Right cardiac atrium (tissue), 5 donors: ENCODE measurements at regions of chr20 and their contacts with region 1.

Region 1: GRCh38 chr20:57654363-57654997 is 34.3 kb upstream of the ZBP1 start:
- DNase-seq: peak in 2 of 3 donors; percentile 49 to 67
- ATAC-seq: peak; percentile 64 to 73
- H3K4me3 ChIP-seq: no peak overlapping the region
- H3K27ac ChIP-seq: no peak overlapping the region
- H3K4me1 ChIP-seq: no peaks in the 10 kb centered on the region
- H3K27me3 ChIP-seq: no peaks in the 10 kb centered on the region

Region 2: GRCh38 chr20:57709931-57710799 is 55.7 kb after region 1 on chr20 and contains the start of gene PMEPA1:
- intact Hi-C with region 1: loop called in 1 of 4 experiments (anchors 10 kb)
- DNase-seq: peak; percentile 95 to 98 (median 97)
- ATAC-seq: peak; percentile 95
- H3K4me3 ChIP-seq: peak within 1 kb of the TSS; percentile 75
- H3K27ac ChIP-seq: peak within 1 kb of the TSS; percentile 84
- H3K4me1 ChIP-seq: peaks cover 6% of the 10 kb centered on the region
- H3K27me3 ChIP-seq: no peaks in the 10 kb centered on the region
- total RNA-seq, gene PMEPA1: 31.7 to 82.0 (median 44.3) TPM

Region 3: DNA sequence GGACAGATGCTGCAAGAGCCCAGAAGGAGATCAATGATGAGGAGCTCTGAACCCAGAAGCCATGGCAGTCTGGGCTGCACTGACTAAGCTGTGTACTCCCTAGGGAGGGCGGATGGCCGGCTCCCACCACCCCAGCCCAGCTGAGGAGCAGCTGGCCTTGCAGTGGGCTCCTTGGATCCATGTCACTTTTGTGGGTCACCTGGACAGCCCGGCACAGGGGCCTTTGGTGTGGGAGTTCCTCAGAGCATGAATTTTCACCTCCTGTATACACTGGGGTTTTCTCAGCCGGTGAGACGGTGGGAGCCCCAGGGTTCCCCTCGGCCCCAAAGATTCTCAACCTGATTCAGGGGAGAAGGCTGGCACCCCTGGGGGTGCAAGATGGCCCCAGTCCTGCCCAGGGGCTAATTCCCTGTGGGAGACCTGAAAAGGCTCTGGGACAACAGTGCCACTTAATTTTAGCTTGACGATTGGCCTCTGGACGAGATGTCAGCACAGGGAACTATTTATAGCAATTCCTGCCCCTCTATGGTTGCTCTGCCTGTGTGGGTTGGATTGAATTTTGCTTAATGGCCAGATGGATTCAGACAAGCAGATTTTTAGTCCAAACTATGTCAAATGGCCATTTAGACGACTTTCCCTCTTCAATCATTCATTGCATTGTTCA is 177.0 kb after region 1 on chr20:
- intact Hi-C with region 1: no loop called
- DNase-seq: no peak
- ATAC-seq: peak; percentile 38 to 47
- H3K4me3 ChIP-seq: no peak overlapping the region
- H3K27ac ChIP-seq: no peak overlapping the region
- H3K4me1 ChIP-seq: no peaks in the 10 kb centered on the region
- H3K27me3 ChIP-seq: no peaks in the 10 kb centered on the region

Region 4: GRCh38 chr20:58087193-58087858 is 432.8 kb after region 1 on chr20:
- intact Hi-C with region 1: loop called (anchors 2 to 10 kb)
- DNase-seq: peak in 1 of 3 donors; percentile 22
- ATAC-seq: peak in 1 of 2 donors; percentile 31
- H3K4me3 ChIP-seq: no peak overlapping the region
- H3K27ac ChIP-seq: no peak overlapping the region
- H3K4me1 ChIP-seq: no peaks in the 10 kb centered on the region
- H3K27me3 ChIP-seq: no peaks in the 10 kb centered on the region

Region 5: GRCh38 chr20:58179432-58180099 is 525.1 kb after region 1 on chr20:
- intact Hi-C with region 1: loop called (anchors 2 to 10 kb)
- DNase-seq: peak; percentile 51 to 86 (median 86)
- ATAC-seq: peak; percentile 73 to 85
- H3K4me3 ChIP-seq: peak overlapping the region; percentile 7
- H3K27ac ChIP-seq: no peak overlapping the region
- H3K4me1 ChIP-seq: no peaks in the 10 kb centered on the region
- H3K27me3 ChIP-seq: no peaks in the 10 kb centered on the region